GM13977 (cell line): ENCODE measurements at regions of chrX and their contacts with region 1.

Region 1: GRCh38 chrX:13750204-13750603 is 15.7 kb downstream of the OFD1 start:
- DNase-seq: peak; percentile 33
- CTCF ChIP-seq: peak; percentile 66

Region 2: GRCh38 chrX:13669246-13669737 is 80.9 kb before region 1 on chrX:
- in situ Hi-C with region 1: loop called (anchors 10 kb)
- DNase-seq: peak; percentile 42
- CTCF ChIP-seq: no peak

Region 3: GRCh38 chrX:13932416-13932815 is 182.2 kb after region 1 on chrX:
- in situ Hi-C with region 1: no loop called
- DNase-seq: no peak
- CTCF ChIP-seq: no peak

Region 4: GRCh38 chrX:14125462-14125861 is 375.3 kb after region 1 on chrX:
- in situ Hi-C with region 1: no loop called
- DNase-seq: no peak
- CTCF ChIP-seq: no peak